ENCODE measurements at regions of chr2 and their contacts with region 1.

Region 1: DNA sequence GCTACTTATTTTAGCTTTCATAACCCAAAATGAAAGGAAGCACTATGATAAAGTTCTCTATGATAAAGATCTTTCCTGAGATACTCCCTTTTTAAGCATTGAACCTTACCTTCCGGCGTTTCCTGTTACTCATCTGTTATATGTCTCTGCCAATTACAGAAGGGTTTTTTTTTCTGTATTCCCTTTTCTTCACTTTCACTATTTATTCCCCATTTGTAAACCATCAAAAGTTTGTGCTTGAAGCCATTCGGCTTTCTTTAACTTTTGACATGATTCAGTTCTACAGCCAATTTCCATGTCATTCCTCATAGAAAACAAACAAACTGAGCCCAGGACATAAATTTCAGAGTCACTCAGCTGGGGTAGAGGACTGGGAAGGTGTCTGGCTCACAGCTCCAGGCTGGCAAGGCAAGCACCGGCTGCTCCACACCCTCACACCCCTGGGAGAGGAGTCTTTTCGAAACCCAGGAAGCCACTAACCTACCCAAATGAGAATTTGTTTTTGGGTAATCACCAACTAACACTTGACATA is 429.4 kb upstream of the TRIB2 start:
- DNase-seq: no peak
- ATAC-seq: peak; percentile 80
- H3K4me3 ChIP-seq: no peak overlapping the region
- H3K27ac ChIP-seq: no peak overlapping the region; the same call in 1 of the 2 replicates
- H3K4me1 ChIP-seq: 0 out of 2 replicates have a peak, but pooled peaks cover 3% of the 10 kb centered on the region
- H3K27me3 ChIP-seq: no peaks in the 10 kb centered on the region
- CTCF ChIP-seq: no peak

Region 2: DNA sequence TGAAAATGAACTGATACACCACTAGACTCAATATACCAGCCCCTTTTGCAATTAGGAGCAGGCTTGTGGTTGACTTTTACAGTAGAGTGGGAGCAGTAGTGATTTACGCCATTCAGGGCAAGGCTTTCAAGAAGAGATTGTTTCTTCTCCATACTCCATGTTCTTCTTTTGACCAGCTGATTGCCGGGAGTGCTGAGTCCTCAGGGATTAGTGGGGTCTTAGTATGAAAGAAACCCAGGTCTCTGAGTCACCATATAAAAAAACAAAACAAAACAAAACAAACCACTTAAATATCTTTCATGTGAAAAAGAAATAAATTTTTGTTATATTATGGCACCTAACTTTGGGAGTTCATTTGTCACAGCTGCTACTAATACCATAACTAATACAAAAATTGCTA is 36.2 kb before region 1 on chr2:
- CTCF ChIA-PET with region 1: no interaction called
- POLR2A ChIA-PET with region 1: no interaction called
- in situ Hi-C with region 1: loop called (anchors 5 kb)
- intact Hi-C with region 1: no loop called
- DNase-seq: no peak
- ATAC-seq: no peak
- H3K4me3 ChIP-seq: no peak overlapping the region
- H3K27ac ChIP-seq: no peak overlapping the region
- H3K4me1 ChIP-seq: no peaks in the 10 kb centered on the region
- H3K27me3 ChIP-seq: no peaks in the 10 kb centered on the region
- CTCF ChIP-seq: no peak

Region 3: GRCh38 chr2:12828784-12829379 is 541.6 kb after region 1 on chr2:
- CTCF ChIA-PET with region 1: no interaction called
- POLR2A ChIA-PET with region 1: no interaction called
- in situ Hi-C with region 1: no loop called
- intact Hi-C with region 1: no loop called
- DNase-seq: no peak
- ATAC-seq: no peak
- H3K4me3 ChIP-seq: no peak overlapping the region
- H3K27ac ChIP-seq: no peak overlapping the region
- H3K4me1 ChIP-seq: no peaks in the 10 kb centered on the region
- H3K27me3 ChIP-seq: no peaks in the 10 kb centered on the region
- CTCF ChIP-seq: no peak